Mammary epithelial cell (primary cell): ENCODE measurements at regions of chr4 and their contacts with region 1.

Region 1: DNA sequence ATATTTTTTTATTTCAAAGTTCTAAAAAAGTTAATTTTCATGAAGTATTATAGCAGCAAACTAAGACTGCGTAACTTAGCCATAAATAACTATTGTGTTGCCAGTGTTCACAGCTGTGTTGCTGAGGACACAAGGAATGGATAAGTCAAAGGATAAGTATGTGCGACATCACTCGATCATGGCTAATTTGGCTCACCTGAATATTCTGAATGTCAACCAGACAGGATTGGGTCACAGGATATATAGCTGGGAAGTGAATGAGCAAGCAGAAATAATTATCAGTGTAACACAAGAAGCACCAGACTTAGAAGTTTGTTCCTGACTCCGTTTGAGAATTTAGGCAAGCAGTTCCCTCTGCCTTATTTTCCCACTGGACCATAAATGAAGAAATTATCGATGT is 33.9 kb downstream of the PRDM8 start:
- DNase-seq: no peak
- H3K4me3 ChIP-seq: no peak overlapping the region
- H3K27ac ChIP-seq: no peak overlapping the region
- H3K4me1 ChIP-seq: peaks cover 5% of the 10 kb centered on the region
- H3K27me3 ChIP-seq: no peaks in the 10 kb centered on the region
- CTCF ChIP-seq: no peak

Region 2: DNA sequence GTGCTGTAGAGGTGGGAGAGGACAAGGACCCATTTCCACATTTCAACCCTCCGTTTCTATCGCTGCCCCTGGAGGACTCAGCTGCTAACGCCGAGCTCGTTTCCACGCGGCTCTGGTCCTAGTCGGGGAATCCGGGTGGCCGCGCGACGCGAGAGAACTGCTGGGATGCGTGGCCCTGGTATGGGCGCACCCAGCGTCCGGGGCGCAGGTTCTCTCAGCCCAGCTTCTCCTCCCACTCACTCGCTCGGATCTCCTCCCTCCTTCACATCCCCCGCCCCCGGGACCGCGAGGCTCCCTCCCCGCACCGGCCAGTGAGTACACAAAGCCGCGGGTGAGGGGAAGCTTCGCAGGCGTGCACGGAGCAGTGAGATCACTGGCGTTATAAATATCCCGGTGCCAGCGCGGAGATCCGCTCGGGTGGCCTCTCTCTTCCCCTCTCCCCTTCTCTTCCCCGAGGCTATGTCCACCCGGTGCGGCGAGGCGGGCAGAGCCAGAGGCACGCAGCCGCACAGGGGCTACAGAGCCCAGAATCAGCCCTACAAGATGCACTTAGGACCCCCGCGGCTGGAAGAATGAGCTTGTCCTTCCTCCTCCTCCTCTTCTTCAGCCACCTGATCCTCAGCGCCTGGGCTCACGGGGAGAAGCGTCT is 35.2 kb after region 1 on chr4 and contains the start of gene FGF5:
- CTCF ChIA-PET with region 1: no interaction called
- dilution Hi-C with region 1: no loop called
- in situ Hi-C with region 1: no loop called
- intact Hi-C with region 1: loop called (anchors 5 kb)
- DNase-seq: peak; percentile 90
- H3K4me3 ChIP-seq: peak within 1 kb of the TSS; percentile 63 to 79 (median 63)
- H3K27ac ChIP-seq: peak within 1 kb of the TSS; percentile 59
- H3K4me1 ChIP-seq: peaks cover 34% of the 10 kb centered on the region
- H3K27me3 ChIP-seq: no peaks in the 10 kb centered on the region
- CTCF ChIP-seq: no peak
- total RNA-seq, gene FGF5: 0.17 to 2.9 TPM